Transverse colon (tissue), 4 donors: ENCODE measurements at regions of chr13 and their contacts with region 1.

Region 1: GRCh38 chr13:44218501-44219240 is 155.0 kb upstream of the SERP2 start:
- DNase-seq: peak; percentile 60
- H3K4me3 ChIP-seq: no peak overlapping the region
- H3K27ac ChIP-seq: peak overlapping the region; percentile 47 to 87 (median 68)
- H3K4me1 ChIP-seq: peaks cover 18 to 52% (median 19%) of the 10 kb centered on the region in 4 donors
- H3K27me3 ChIP-seq: no peaks in the 10 kb centered on the region
- CTCF ChIP-seq: no peak
- EP300 ChIP-seq: no peak
- POLR2A ChIP-seq: no peak

Region 2: DNA sequence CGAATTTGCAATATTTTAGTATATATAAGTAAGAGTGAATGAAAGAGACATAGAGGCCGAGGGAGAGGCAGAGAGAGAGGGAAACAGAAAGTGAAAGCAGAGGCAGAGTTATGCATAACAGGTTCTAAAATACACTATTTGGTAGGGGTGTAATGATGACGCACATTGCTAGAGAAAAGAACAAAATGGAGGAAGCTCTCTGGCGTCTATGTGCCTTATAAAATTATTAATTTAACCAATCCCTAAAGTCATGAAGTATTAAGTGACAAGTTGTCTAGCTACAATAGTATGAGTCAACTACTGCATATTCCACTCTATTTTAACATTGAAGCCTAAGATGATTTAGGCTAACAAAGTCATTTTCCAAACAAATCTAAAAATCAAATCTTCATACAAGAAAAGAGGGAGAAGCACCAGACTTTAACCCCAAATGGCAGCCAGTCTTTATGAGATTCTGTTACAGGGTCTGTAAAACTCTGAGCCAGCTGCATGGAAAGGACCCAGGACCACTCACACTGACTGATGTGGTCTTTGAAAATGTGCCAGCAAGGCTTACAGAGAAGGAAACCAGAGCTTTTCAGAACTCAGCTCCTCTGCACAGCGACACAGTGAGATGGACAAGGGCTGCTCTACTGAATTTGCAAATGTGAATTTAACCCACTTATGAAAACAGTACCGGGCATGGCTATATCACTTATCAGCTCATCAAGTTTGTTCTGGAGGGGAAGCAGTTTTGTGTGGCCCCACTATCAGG is 56.0 kb after region 1 on chr13:
- in situ Hi-C with region 1: no loop called
- intact Hi-C with region 1: loop called (anchors 5 kb)
- DNase-seq: no peak
- H3K4me3 ChIP-seq: peak overlapping the region in 1 of 4 donors; percentile 12
- H3K27ac ChIP-seq: peak overlapping the region; percentile 76 to 81 (median 79)
- H3K4me1 ChIP-seq: peaks cover 13 to 51% (median 24%) of the 10 kb centered on the region in 4 donors
- H3K27me3 ChIP-seq: no peaks in the 10 kb centered on the region
- CTCF ChIP-seq: no peak
- EP300 ChIP-seq: peak; percentile 68
- POLR2A ChIP-seq: no peak

Region 3: GRCh38 chr13:44300895-44301638 is 82.4 kb after region 1 on chr13:
- in situ Hi-C with region 1: no loop called
- intact Hi-C with region 1: loop called (anchors 10 kb)
- DNase-seq: no peak
- H3K4me3 ChIP-seq: no peak overlapping the region
- H3K27ac ChIP-seq: peak overlapping the region; percentile 73 to 83 (median 78)
- H3K4me1 ChIP-seq: peaks cover 11 to 54% (median 15%) of the 10 kb centered on the region in 4 donors
- H3K27me3 ChIP-seq: no peaks in the 10 kb centered on the region
- CTCF ChIP-seq: no peak
- EP300 ChIP-seq: no peak
- POLR2A ChIP-seq: no peak